ENCODE measurements at regions of chr7 and their contacts with region 1.

Region 1: DNA sequence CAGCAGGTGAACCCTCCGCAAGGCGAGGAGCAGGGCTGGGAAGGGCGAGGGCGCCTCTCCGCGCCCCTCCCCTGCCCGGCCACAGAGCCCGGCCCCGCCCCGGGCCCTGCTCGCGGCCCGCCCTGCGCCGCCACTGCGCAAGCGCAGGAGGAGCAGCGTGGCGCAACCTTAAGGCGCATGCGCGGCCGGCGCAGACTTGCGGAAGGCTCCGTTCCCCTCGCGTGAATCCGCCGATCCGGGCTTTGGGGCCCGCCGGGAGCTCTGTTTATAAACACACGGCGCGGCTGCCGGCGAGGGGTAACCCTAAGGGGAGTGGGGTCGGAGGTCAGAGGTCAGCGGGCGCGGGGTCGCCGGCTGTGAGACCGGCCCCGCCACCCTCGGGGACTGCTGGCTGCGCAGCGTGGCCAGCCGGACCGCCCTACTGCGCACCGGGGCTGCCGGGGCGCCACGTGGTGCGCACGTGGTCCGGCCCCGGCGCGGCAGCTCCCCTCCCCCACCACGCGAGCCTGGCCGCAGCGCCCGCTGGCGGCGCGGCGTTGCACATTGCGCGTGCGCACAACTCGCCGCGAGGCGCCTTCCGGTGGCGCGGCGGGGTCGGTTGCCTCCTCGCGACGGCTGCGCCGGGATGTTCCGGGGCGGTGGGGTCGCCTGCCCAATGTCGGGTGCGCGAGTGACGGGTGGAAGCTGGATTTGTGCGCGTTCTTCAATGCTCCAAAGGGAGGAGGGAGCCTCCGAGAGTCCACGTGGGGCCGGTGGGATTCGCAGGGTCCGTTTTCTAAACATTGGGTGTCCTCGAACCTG is 40.2 kb upstream of the FOXK1 start:
- DNase-seq: peak; percentile 93 to 98 (median 96)
- ATAC-seq: peak; percentile 86
- H3K4me3 ChIP-seq: peak overlapping the region; percentile 74 to 75
- H3K4me3 Mint-ChIP-seq: peak overlapping the region; percentile 89
- H3K27ac ChIP-seq: peak overlapping the region; percentile 83 to 88
- H3K27ac Mint-ChIP-seq: peak overlapping the region; percentile 96
- H3K4me1 ChIP-seq: peaks cover 8% of the 10 kb centered on the region
- H3K4me1 Mint-ChIP-seq: peaks cover 8% of the 10 kb centered on the region
- H3K27me3 ChIP-seq: no peaks in the 10 kb centered on the region
- H3K27me3 Mint-ChIP-seq: no peaks in the 10 kb centered on the region
- CTCF ChIP-seq: no peak

Region 2: DNA sequence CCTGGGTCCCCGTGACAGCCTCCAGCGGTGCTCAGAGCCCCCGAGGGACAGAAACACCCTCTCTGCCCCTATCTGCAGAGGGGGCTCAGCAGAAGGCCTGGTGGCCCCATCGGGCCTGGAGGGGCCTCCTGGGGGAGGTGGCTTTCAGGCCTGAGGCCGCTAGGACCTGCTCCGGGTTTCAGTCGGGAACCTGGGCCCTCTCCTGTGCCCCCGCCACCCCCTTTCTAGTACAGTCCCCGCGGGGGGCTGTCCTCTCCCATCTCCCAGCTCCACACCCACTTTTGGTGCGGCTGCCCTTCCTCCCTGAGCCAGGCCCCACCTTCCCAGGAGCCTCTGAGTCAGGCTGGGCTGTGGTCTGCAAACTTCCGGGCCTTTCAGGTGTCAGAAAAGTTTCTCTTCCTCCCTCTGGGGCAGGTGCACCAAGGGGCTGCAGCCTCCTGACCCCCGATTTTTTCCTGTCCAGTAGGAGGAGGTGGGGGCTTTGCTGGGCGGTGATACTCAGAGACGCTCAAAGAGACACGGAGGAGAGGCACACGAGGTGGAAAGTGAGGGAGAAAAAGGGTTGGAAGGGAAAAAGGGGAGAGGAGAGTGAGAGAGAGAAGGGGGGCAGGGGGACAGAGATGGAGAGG is 1598.9 kb before region 1 on chr7:
- CTCF ChIA-PET with region 1: no interaction called
- POLR2A ChIA-PET with region 1: no interaction called
- intact Hi-C with region 1: no loop called
- DNase-seq: peak; percentile 20 to 82 (median 73)
- ATAC-seq: peak; percentile 61
- H3K4me3 ChIP-seq: peak overlapping the region; percentile 84 to 96
- H3K4me3 Mint-ChIP-seq: peak overlapping the region; percentile 92
- H3K27ac ChIP-seq: peak overlapping the region; percentile 84 to 88
- H3K27ac Mint-ChIP-seq: peak overlapping the region; percentile 94
- H3K4me1 ChIP-seq: peaks cover 49% of the 10 kb centered on the region
- H3K4me1 Mint-ChIP-seq: peaks cover 59% of the 10 kb centered on the region
- H3K27me3 ChIP-seq: no peaks in the 10 kb centered on the region
- H3K27me3 Mint-ChIP-seq: no peaks in the 10 kb centered on the region
- CTCF ChIP-seq: no peak

Region 3: DNA sequence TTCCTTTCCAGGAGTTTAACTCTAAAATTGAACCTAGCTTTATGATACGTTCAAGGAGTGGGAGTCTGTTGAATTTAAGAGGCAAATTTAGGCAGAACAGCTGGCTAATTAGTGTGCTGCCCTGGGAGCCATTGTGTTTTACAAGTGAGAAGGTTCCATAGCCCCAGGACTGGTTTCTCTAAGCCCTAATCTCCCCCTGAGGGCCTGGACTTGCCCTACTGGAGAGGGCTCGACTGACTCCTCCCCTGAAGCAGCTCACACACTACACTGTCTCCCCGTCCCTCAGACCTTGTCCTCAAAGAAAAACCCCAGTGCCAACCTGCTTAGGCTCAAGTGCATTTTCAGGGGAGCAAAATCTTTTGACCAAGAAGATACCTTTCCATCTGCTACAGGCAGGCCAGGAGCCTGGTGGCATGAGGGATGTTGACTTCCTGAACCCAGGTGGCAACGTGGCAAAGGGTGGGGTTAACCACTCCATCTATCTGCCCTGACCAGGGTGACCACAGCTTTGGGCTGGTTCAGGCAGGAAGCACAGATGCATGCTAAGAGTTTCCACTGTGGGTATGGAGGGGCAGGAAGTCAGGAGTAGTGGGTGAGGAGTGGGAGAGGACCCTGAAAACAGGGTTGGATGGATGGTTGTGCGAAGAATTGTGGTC is 1529.3 kb before region 1 on chr7:
- CTCF ChIA-PET with region 1: no interaction called
- POLR2A ChIA-PET with region 1: no interaction called
- intact Hi-C with region 1: no loop called
- DNase-seq: peak in 4 of 9 experiments; percentile 34 to 62 (median 52)
- ATAC-seq: peak; percentile 57
- H3K4me3 ChIP-seq: no peak overlapping the region
- H3K4me3 Mint-ChIP-seq: peak overlapping the region; percentile 46
- H3K27ac ChIP-seq: peak overlapping the region in 1 of 2 experiments; percentile 42
- H3K27ac Mint-ChIP-seq: peak overlapping the region; percentile 85
- H3K4me1 ChIP-seq: peaks cover 53% of the 10 kb centered on the region
- H3K4me1 Mint-ChIP-seq: peaks cover 77% of the 10 kb centered on the region
- H3K27me3 ChIP-seq: no peaks in the 10 kb centered on the region
- H3K27me3 Mint-ChIP-seq: no peaks in the 10 kb centered on the region
- CTCF ChIP-seq: no peak

Region 4: GRCh38 chr7:4610768-4611467 is 30.9 kb before region 1 on chr7:
- CTCF ChIA-PET with region 1: no interaction called
- POLR2A ChIA-PET with region 1: interaction called, 5 read pairs
- intact Hi-C with region 1: loop called in 1 of 2 experiments (anchors 1 kb)
- DNase-seq: peak; percentile 12 to 80 (median 59)
- ATAC-seq: peak; percentile 91
- H3K4me3 ChIP-seq: no peak overlapping the region
- H3K4me3 Mint-ChIP-seq: no peak overlapping the region
- H3K27ac ChIP-seq: no peak overlapping the region
- H3K27ac Mint-ChIP-seq: no peak overlapping the region
- H3K4me1 ChIP-seq: no peaks in the 10 kb centered on the region
- H3K4me1 Mint-ChIP-seq: peaks cover 8% of the 10 kb centered on the region
- H3K27me3 ChIP-seq: no peaks in the 10 kb centered on the region
- H3K27me3 Mint-ChIP-seq: peaks cover 6% of the 10 kb centered on the region
- CTCF ChIP-seq: peak; percentile 70

Region 5: GRCh38 chr7:4687956-4688355 is 46.1 kb after region 1 on chr7:
- CTCF ChIA-PET with region 1: interaction called, 11 read pairs
- POLR2A ChIA-PET with region 1: interaction called, 91 read pairs
- intact Hi-C with region 1: no loop called
- DNase-seq: no peak
- ATAC-seq: no peak
- H3K4me3 ChIP-seq: no peak overlapping the region
- H3K4me3 Mint-ChIP-seq: no peak overlapping the region
- H3K27ac ChIP-seq: no peak overlapping the region
- H3K27ac Mint-ChIP-seq: no peak overlapping the region
- H3K4me1 ChIP-seq: peaks cover 50% of the 10 kb centered on the region
- H3K4me1 Mint-ChIP-seq: peaks cover 77% of the 10 kb centered on the region
- H3K27me3 ChIP-seq: no peaks in the 10 kb centered on the region
- H3K27me3 Mint-ChIP-seq: no peaks in the 10 kb centered on the region
- CTCF ChIP-seq: no peak

Region 6: GRCh38 chr7:4725014-4725849 is 83.4 kb after region 1 on chr7:
- CTCF ChIA-PET with region 1: interaction called, 4 read pairs
- POLR2A ChIA-PET with region 1: interaction called, 14 read pairs
- intact Hi-C with region 1: loop called (anchors 2 to 5 kb)
- DNase-seq: peak in 8 of 9 experiments; percentile 30 to 84 (median 66)
- ATAC-seq: peak; percentile 81
- H3K4me3 ChIP-seq: peak overlapping the region; percentile 70 to 80
- H3K4me3 Mint-ChIP-seq: peak overlapping the region; percentile 95
- H3K27ac ChIP-seq: peak overlapping the region; percentile 91 to 94
- H3K27ac Mint-ChIP-seq: peak overlapping the region; percentile 99
- H3K4me1 ChIP-seq: peaks cover 54% of the 10 kb centered on the region
- H3K4me1 Mint-ChIP-seq: peaks cover 55% of the 10 kb centered on the region
- H3K27me3 ChIP-seq: no peaks in the 10 kb centered on the region
- H3K27me3 Mint-ChIP-seq: no peaks in the 10 kb centered on the region
- CTCF ChIP-seq: no peak

Region 7: DNA sequence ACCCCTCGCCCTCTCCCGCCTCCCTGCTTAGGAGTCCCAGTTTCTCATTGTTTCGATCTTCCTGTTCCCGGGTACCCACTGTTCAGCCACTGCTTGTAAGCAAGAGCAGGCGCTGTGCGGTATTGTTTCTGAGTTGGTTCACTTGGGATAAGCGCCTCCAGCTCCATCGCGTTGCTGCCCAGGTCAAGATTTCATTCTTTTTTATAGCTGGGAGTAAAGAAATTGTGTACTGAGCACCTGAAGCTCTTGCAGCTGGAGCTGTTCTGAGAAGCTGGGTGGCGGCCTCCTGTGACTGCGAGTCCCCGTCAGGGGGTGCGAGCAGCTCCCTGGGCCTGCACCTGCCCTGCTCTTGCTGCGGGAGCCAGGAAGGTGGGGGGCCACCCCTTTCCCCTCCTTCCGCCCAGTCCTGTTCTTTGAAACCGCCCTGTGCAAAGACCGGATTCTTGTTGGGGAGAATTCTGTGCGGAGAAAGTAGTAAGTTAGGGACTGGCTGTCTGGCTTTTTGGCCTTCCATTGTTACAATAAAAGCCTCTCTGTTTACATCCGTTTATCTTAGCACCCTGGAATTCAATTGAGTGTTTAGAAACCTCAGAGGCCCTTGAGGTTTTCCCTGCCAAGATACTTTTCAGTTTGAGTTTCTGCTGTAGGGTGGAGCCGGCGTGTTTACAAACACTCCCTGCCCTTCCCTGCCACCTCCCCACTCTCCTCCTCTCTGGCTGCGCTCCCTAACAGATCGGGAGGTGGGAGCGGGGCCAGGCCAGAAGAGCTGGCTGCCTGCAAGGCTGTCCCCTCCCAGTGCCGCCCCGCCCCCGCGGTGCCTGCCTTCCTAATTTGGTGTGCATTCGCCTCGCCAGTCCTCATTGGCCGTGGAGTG is 102.8 kb after region 1 on chr7:
- CTCF ChIA-PET with region 1: interaction called, 3 read pairs
- POLR2A ChIA-PET with region 1: interaction called, 21 read pairs
- intact Hi-C with region 1: loop called in 1 of 2 experiments (anchors 2 kb)
- DNase-seq: peak; percentile 38 to 88 (median 72)
- ATAC-seq: peak; percentile 68
- H3K4me3 ChIP-seq: peak overlapping the region; percentile 50 to 64
- H3K4me3 Mint-ChIP-seq: peak overlapping the region; percentile 79
- H3K27ac ChIP-seq: peak overlapping the region; percentile 81 to 84
- H3K27ac Mint-ChIP-seq: peak overlapping the region; percentile 93
- H3K4me1 ChIP-seq: peaks cover 65% of the 10 kb centered on the region
- H3K4me1 Mint-ChIP-seq: peaks cover 67% of the 10 kb centered on the region
- H3K27me3 ChIP-seq: no peaks in the 10 kb centered on the region
- H3K27me3 Mint-ChIP-seq: no peaks in the 10 kb centered on the region
- CTCF ChIP-seq: no peak

Region 8: GRCh38 chr7:4775250-4775847 is 133.5 kb after region 1 on chr7 and contains the start of gene AP5Z1:
- CTCF ChIA-PET with region 1: interaction called, 9 read pairs
- POLR2A ChIA-PET with region 1: interaction called, 41 read pairs
- intact Hi-C with region 1: loop called (anchors 1 kb)
- DNase-seq: peak; percentile 90 to 99 (median 95)
- ATAC-seq: peak; percentile 93
- H3K4me3 ChIP-seq: peak within 1 kb of the TSS; percentile 80 to 98
- H3K4me3 Mint-ChIP-seq: peak within 1 kb of the TSS; percentile 99
- H3K27ac ChIP-seq: peak within 1 kb of the TSS; percentile 93 to 94
- H3K27ac Mint-ChIP-seq: peak within 1 kb of the TSS; percentile 99
- H3K4me1 ChIP-seq: peaks cover 25% of the 10 kb centered on the region
- H3K4me1 Mint-ChIP-seq: peaks cover 47% of the 10 kb centered on the region
- H3K27me3 ChIP-seq: no peaks in the 10 kb centered on the region
- H3K27me3 Mint-ChIP-seq: no peaks in the 10 kb centered on the region
- CTCF ChIP-seq: no peak
- total RNA-seq, gene AP5Z1: 129 to 131 TPM

Region 9: DNA sequence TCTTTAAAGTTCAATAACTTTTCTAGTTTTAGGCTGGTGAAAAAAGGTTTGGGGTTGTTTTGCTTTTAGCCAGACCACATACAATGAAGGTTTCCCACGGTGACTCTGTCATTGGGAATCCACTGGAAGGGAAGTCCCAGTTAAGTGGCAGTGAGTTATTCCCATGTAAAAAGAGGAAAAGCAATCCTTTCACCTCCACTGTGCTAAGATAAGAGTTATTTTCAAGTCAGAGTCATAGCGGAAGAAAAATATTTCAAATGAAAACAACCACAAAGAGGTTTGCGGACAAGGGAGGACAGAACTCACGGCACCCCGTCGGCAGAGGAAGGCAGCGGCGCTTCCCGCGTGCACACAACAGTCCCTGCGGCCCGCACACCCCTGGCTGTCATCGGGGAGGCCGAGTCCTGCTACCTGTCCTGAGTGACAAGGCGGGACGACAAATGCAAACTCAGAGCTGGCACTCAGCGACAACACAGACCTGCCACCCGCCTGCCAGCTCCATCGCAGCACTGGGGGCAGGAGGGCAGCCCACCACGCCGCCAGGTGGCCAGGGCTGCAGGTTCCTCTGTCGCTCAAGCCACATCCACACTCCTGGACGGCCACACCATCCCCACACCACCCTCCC is 229.3 kb after region 1 on chr7:
- CTCF ChIA-PET with region 1: no interaction called
- POLR2A ChIA-PET with region 1: no interaction called
- intact Hi-C with region 1: no loop called
- DNase-seq: no peak
- ATAC-seq: no peak
- H3K4me3 ChIP-seq: no peak overlapping the region
- H3K4me3 Mint-ChIP-seq: no peak overlapping the region
- H3K27ac ChIP-seq: no peak overlapping the region
- H3K27ac Mint-ChIP-seq: no peak overlapping the region
- H3K4me1 ChIP-seq: no peaks in the 10 kb centered on the region
- H3K4me1 Mint-ChIP-seq: peaks cover 4% of the 10 kb centered on the region
- H3K27me3 ChIP-seq: no peaks in the 10 kb centered on the region
- H3K27me3 Mint-ChIP-seq: peaks cover 25% of the 10 kb centered on the region
- CTCF ChIP-seq: no peak

Region 10: GRCh38 chr7:5193880-5194279 is 552.0 kb after region 1 on chr7:
- CTCF ChIA-PET with region 1: no interaction called
- POLR2A ChIA-PET with region 1: no interaction called
- intact Hi-C with region 1: loop called in 1 of 2 experiments (anchors 5 kb)
- DNase-seq: no peak
- ATAC-seq: no peak
- H3K4me3 ChIP-seq: no peak overlapping the region
- H3K4me3 Mint-ChIP-seq: no peak overlapping the region
- H3K27ac ChIP-seq: no peak overlapping the region
- H3K27ac Mint-ChIP-seq: no peak overlapping the region
- H3K4me1 ChIP-seq: peaks cover 13% of the 10 kb centered on the region
- H3K4me1 Mint-ChIP-seq: peaks cover 41% of the 10 kb centered on the region
- H3K27me3 ChIP-seq: no peaks in the 10 kb centered on the region
- H3K27me3 Mint-ChIP-seq: no peaks in the 10 kb centered on the region
- CTCF ChIP-seq: no peak

Region 11: DNA sequence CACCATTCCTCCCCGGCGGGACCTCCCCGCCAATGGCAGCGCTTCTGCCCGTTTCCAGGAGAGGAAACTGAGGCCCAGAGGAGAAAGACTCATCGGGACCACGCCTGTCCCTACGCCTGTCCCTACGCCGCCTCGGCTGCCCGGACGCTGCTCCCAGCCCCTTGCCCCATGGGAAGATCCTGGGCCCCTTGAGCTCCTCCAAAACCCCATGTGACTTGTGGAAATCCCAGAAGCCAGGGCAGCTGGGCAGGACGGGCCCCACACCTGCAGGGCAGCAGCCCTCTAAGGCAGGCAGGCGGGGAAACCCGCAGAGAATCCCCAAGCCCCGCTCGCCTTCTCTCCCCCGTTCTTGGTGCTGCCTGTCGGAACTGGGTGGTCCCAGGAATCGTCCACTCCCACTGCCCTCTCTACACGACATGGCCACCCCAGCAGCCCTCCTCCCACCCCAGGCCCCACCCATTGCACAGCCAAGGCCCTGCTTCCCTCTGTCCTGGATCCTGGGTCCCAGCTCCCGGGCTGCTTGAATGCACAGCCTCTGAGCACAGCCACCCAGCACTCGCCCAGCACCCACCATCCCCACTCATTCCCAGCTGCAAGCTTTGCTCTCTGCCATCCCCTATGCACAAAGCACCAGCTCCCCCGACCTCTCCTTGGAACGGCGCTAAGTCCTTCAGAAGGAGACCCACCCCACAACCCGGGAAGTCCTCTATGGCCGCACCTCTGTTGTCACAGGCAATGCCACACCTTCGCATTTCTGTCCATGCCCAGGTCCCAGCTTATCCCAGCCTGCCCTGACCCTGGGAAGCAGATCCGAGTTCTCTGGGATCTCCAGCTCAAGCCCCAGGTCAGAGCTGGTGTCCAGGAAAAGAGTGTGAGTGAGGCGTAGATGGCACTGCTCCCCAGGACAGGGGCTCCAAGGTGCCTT is 691.5 kb after region 1 on chr7:
- CTCF ChIA-PET with region 1: no interaction called
- POLR2A ChIA-PET with region 1: no interaction called
- intact Hi-C with region 1: no loop called
- DNase-seq: no peak
- ATAC-seq: no peak
- H3K4me3 ChIP-seq: no peak overlapping the region
- H3K4me3 Mint-ChIP-seq: no peak overlapping the region
- H3K27ac ChIP-seq: no peak overlapping the region
- H3K27ac Mint-ChIP-seq: no peak overlapping the region
- H3K4me1 ChIP-seq: peaks cover 16% of the 10 kb centered on the region
- H3K4me1 Mint-ChIP-seq: peaks cover 17% of the 10 kb centered on the region
- H3K27me3 ChIP-seq: no peaks in the 10 kb centered on the region
- H3K27me3 Mint-ChIP-seq: no peaks in the 10 kb centered on the region
- CTCF ChIP-seq: no peak

Measured in CD8-positive, alpha-beta T cell (primary cell).